Activated CD4-positive, alpha-beta memory T cell treated with anti-CD3 and anti-CD28 coated beads for 36 hours (primary cell): ENCODE measurements at regions of chr2 and their contacts with region 1.

Region 1: DNA sequence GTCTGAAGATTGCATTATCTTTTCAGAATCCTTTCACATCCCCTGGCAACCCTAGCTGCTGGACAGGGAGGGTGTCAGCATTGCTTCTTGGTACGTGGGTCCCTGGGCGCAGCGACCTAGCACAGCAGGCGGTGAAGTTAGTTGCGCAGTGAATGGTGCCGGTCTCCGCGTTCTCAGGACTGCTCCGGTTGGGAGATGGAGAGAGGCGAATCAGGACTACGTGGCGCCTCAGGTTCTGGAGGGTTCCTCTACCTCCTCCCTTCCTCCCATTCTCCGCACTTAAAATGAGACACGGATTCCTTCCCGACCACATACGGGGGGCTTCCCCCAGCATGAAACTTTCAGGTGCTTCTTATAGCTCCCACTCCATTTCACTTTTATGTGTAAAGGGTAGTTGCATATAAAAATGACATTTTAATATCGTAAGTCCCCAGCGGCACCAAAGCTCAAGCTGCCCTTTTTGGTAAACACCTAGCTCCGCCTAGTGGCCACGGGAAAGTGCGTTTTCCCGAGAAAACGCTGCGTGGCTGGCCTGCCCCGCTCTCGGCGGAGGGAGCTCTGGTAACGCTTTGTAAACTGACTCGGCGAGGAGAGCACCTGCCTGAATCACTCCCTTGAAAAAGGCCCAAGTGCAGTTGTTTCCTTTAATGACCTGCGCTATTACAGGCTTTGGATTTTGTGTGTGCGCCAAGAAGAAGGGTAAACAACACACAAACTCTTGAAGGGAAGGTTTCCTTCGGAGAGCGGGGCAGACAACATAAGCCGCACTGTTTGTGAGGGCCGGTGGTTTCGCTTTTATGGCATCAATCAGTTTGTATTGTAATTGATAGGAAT is 32.9 kb upstream of the INHBB start:
- DNase-seq: peak; percentile 87
- H3K4me3 Mint-ChIP-seq: peak overlapping the region; percentile 56
- H3K27ac Mint-ChIP-seq: no peak overlapping the region
- H3K4me1 Mint-ChIP-seq: peaks cover 22% of the 10 kb centered on the region
- H3K27me3 Mint-ChIP-seq: no peaks in the 10 kb centered on the region

Region 2: GRCh38 chr2:119702918-119703401 is 610.1 kb before region 1 on chr2:
- CTCF ChIA-PET with region 1: interaction called, 5 read pairs
- POLR2A ChIA-PET with region 1: no interaction called
- intact Hi-C with region 1: loop called (anchors 5 kb)
- DNase-seq: peak; percentile 80
- H3K4me3 Mint-ChIP-seq: no peak overlapping the region
- H3K27ac Mint-ChIP-seq: no peak overlapping the region
- H3K4me1 Mint-ChIP-seq: peaks cover 19% of the 10 kb centered on the region
- H3K27me3 Mint-ChIP-seq: no peaks in the 10 kb centered on the region

Region 3: DNA sequence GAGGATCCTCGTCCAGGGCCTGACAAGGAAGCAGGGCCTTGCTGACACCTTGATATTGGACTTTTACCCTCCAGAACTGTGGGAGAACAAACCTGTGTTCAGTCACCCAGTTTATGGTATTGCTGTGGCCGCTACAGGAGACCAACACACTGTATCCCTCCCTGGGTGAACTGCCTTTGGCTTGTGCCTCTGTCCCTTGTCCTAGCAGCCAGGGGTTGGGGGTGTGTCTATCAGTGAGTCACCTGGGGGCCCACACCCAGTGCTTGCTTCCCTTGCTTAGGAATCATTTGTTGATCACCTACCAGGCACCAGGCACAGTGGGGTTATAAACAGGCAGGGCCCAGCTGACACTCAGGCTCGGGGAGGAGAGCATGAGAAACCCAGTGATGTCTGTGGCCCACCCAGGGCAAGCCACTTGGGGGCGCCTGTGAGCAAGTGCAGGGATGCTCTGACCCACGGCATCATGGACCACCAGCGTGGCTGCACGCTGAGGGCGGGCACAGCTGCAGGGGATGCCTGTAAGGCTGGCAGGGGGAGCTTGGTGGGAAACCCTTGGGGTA is 107.0 kb before region 1 on chr2:
- CTCF ChIA-PET with region 1: interaction called, 17 read pairs
- POLR2A ChIA-PET with region 1: no interaction called
- intact Hi-C with region 1: loop called (anchors 1 kb)
- DNase-seq: peak; percentile 66
- H3K4me3 Mint-ChIP-seq: no peak overlapping the region
- H3K27ac Mint-ChIP-seq: no peak overlapping the region
- H3K4me1 Mint-ChIP-seq: no peaks in the 10 kb centered on the region
- H3K27me3 Mint-ChIP-seq: no peaks in the 10 kb centered on the region

Region 4: GRCh38 chr2:120231974-120232635 is 81.0 kb before region 1 on chr2:
- CTCF ChIA-PET with region 1: interaction called, 14 read pairs
- POLR2A ChIA-PET with region 1: interaction called, 4 read pairs
- intact Hi-C with region 1: loop called (anchors 1 kb)
- DNase-seq: peak; percentile 85
- H3K4me3 Mint-ChIP-seq: peak overlapping the region; percentile 82
- H3K27ac Mint-ChIP-seq: peak overlapping the region; percentile 96
- H3K4me1 Mint-ChIP-seq: peaks cover 40% of the 10 kb centered on the region
- H3K27me3 Mint-ChIP-seq: no peaks in the 10 kb centered on the region

Region 5: GRCh38 chr2:120261387-120262006 is 51.6 kb before region 1 on chr2:
- CTCF ChIA-PET with region 1: interaction called, 9 read pairs
- POLR2A ChIA-PET with region 1: no interaction called
- intact Hi-C with region 1: loop called (anchors 2 kb)
- DNase-seq: peak; percentile 82
- H3K4me3 Mint-ChIP-seq: no peak overlapping the region
- H3K27ac Mint-ChIP-seq: no peak overlapping the region
- H3K4me1 Mint-ChIP-seq: peaks cover 28% of the 10 kb centered on the region
- H3K27me3 Mint-ChIP-seq: no peaks in the 10 kb centered on the region

Region 6: GRCh38 chr2:120294008-120294340 is 19.1 kb before region 1 on chr2:
- CTCF ChIA-PET with region 1: interaction called, 15 read pairs
- POLR2A ChIA-PET with region 1: interaction called, 3 read pairs
- intact Hi-C with region 1: no loop called
- DNase-seq: no peak
- H3K4me3 Mint-ChIP-seq: no peak overlapping the region
- H3K27ac Mint-ChIP-seq: no peak overlapping the region
- H3K4me1 Mint-ChIP-seq: peaks cover 7% of the 10 kb centered on the region
- H3K27me3 Mint-ChIP-seq: no peaks in the 10 kb centered on the region